ENCODE measurements at regions of chr12 and their contacts with region 1.

Region 1: DNA sequence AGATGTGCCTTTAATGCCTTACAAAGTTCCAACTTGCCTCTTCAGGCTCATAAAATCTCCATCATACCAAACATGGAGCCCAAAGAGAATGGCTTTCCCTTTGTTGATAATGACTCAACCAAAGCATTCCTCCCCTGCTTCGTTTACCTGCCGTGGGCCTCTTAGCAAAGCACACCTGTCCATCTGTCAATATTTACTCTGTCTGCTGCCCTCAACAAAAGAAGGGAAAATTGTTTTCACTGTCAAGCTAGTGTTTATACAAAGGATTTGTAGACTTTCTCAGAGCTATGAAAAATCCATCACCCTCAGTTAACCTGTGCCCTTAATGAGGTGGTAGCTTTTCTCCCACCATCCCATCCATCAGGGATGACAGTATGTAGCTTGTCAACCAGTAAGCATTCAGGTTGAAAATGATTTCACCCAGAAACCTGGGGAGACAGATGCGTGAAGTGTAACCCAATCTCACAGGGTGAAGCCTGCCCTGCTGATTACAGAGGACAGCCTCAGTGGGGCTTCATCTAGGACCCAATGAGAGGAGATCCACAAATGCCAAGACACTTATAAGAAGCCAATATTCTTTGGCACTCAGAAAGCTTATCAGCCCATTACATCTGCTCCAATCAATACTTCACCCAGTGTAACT is 278.1 kb downstream of the NUAK1 start:
- DNase-seq: no peak
- H3K4me3 ChIP-seq: no peak overlapping the region
- H3K27ac ChIP-seq: no peak overlapping the region
- H3K4me1 ChIP-seq: peaks cover 5 to 7% of the 10 kb centered on the region in 2 donors
- H3K27me3 ChIP-seq: no peaks in the 10 kb centered on the region
- CTCF ChIP-seq: no peak

Region 2: DNA sequence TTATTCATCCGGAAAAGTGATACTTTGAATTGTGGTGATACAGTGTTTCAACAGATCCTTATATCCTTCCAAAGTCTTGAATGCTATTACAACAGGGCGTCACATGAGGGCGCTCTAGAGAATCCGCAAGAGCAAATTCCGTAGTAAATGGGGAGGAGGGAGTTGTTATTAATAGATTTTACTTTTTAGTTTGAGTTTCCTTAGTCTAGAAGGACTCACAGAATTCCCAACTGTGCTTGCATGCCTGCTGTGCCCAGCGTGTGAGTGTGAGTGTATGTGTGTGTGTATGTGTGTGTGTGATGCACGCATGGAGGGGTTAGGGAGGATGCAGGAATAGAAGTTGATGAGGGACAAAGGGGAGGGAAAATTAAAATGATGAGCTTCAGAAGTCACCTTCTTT is 154.9 kb before region 1 on chr12:
- intact Hi-C with region 1: loop called (anchors 5 kb)
- DNase-seq: peak in 1 of 2 donors; percentile 82
- H3K4me3 ChIP-seq: no peak overlapping the region
- H3K27ac ChIP-seq: peak overlapping the region; percentile 74 to 83
- H3K4me1 ChIP-seq: peaks cover 0 to 18% of the 10 kb centered on the region in 2 donors
- H3K27me3 ChIP-seq: no peaks in the 10 kb centered on the region
- CTCF ChIP-seq: peak; percentile 57 to 90 (median 84)

Region 3: DNA sequence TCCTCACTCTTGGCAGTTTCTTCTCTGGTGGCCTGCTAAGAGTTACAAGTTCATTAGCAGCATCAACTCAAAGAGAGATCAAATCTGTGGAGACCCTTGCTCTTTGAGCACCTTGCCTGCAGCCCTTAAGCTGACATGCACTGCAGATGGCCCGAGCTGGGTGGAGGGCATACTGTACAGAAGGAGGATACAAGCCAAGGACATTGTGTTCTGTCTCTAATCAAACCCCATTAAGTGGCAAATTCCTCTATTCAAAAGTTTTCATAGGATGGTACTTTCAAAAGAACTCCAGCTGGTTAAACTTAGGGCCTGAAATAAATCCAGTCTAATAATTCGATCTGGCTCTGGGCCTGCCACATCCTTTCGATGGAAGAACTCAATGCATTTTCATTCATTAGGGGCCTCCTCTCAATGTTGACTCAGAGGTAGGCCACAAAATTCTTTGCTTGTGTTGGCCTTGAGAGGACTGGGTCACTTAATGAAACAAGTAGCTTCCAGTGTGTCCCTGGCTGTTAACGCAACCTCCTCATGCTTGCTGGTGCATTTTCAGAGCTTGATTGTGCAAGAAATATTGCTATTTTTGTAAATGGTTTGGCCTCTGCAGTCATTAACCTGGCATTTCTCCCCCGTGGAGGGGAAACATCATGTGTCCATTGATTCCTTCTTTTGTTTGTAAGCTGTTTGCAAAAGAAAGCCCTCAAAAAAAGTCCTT is 40.1 kb before region 1 on chr12:
- intact Hi-C with region 1: loop called (anchors 5 kb)
- DNase-seq: peak; percentile 41 to 87
- H3K4me3 ChIP-seq: no peak overlapping the region
- H3K27ac ChIP-seq: peak overlapping the region; percentile 34 to 71
- H3K4me1 ChIP-seq: peaks cover 5 to 26% of the 10 kb centered on the region in 2 donors
- H3K27me3 ChIP-seq: no peaks in the 10 kb centered on the region
- CTCF ChIP-seq: no peak

Region 4: DNA sequence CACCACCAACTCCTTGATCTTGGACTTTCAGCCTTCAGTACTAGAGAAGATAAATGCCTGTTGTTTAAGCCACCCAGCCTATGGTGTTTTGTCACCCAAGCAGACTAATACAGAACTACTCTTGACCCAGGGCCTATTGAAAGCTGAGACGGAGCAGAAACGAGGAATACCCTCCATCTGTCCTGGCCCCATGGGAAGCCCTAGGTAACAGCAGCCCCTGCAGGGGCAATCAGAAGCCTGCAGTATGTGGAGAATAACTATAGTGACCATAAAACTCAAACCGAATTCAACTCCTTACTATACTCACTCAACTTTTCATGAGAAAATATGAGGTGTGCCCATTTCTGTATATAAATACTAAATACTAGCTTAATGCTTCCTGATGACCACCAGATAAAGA is 29.3 kb before region 1 on chr12:
- intact Hi-C with region 1: no loop called
- DNase-seq: no peak
- H3K4me3 ChIP-seq: no peak overlapping the region
- H3K27ac ChIP-seq: no peak overlapping the region
- H3K4me1 ChIP-seq: peaks cover 0 to 9% of the 10 kb centered on the region in 2 donors
- H3K27me3 ChIP-seq: no peaks in the 10 kb centered on the region
- CTCF ChIP-seq: no peak

Region 5: DNA sequence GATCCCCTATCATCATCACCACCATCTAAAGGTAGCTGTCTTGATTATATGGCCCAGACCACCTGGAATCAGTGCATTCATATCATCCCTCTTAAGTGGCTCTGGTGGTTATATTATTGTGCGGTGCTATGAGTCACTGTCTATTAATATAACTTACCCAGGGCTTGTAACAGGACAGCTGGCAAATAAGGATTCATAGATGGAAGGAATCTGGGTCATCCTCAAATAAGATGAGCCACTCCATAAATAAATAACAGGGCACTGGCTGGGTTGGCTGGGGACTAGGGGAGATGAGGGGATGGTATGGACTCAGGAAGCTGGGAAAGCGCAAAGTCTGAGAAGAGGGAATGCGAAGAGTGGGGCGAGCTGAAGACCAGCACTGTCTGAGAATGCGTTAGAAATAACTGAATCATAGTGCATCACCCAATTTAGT is 62.0 kb after region 1 on chr12:
- intact Hi-C with region 1: loop called (anchors 5 kb)
- DNase-seq: no peak
- H3K4me3 ChIP-seq: no peak overlapping the region
- H3K27ac ChIP-seq: peak overlapping the region in 1 of 2 donors; percentile 13
- H3K4me1 ChIP-seq: peaks cover 0 to 8% of the 10 kb centered on the region in 2 donors
- H3K27me3 ChIP-seq: no peaks in the 10 kb centered on the region
- CTCF ChIP-seq: no peak

Region 6: DNA sequence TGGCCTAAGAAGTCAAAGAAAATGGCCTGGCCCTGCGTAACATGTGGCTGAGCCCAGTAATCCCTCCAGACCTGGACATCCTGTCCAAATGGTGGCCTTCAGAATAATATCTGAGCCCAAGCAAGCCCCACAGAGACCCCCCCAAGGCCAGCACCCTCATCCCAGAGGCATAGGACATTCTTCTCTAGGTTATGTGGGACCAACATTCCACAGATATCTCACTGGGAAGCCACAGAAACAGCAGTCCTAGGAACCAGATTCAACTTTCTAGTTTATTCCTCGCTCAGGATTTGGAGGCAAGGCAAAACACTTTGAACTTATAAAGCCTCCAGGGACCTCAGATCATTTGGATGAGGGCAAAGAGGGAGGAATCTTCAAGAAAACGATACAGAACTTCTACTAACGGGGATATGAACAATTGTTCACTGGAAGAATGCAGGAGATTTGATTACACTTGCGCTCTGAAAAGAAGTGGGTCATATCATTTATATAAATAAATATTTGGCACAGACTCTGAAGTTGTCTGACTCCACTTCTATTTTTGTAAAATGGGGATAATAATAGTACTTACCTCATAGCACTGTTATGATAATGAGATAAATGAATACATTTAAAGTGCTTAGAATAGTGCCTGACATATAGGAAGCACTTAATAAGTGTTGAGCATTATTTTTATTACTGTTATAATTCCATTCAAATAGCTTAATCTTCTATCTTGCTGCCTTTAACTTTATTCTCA is 106.5 kb after region 1 on chr12:
- intact Hi-C with region 1: loop called (anchors 2 kb)
- DNase-seq: no peak
- H3K4me3 ChIP-seq: no peak overlapping the region
- H3K27ac ChIP-seq: peak overlapping the region; percentile 77 to 84
- H3K4me1 ChIP-seq: peaks cover 10 to 21% of the 10 kb centered on the region in 2 donors
- H3K27me3 ChIP-seq: no peaks in the 10 kb centered on the region
- CTCF ChIP-seq: no peak

Region 7: DNA sequence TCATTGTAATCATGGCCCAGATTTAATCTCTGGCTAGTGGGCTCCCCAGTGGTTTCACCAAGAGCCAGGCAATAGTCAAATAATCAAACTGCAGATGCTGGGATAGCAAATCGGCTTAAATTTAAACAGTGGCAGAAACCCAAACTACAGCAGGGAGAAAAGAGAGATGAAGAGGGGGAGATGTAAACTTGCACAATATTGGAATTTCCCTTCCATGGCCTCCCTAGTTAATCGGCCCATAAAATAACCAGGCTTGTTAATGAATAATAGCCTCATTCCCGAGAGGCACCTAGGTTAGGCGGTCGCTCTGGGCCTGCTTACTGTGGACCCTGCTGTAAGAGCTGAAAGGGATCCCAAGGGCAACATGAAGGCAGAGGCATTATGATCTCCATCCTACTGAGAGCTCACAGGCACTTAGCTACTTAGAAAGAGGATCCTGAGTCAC is 161.9 kb after region 1 on chr12:
- intact Hi-C with region 1: loop called (anchors 5 kb)
- DNase-seq: no peak
- H3K4me3 ChIP-seq: no peak overlapping the region
- H3K27ac ChIP-seq: no peak overlapping the region
- H3K4me1 ChIP-seq: peaks cover 0 to 12% of the 10 kb centered on the region in 2 donors
- H3K27me3 ChIP-seq: no peaks in the 10 kb centered on the region
- CTCF ChIP-seq: no peak

Region 8: GRCh38 chr12:106090591-106091411 is 230.1 kb after region 1 on chr12:
- intact Hi-C with region 1: loop called (anchors 5 kb)
- DNase-seq: peak; percentile 77 to 93
- H3K4me3 ChIP-seq: peak overlapping the region in 1 of 2 donors; percentile 15
- H3K27ac ChIP-seq: peak overlapping the region; percentile 87 to 92
- H3K4me1 ChIP-seq: peaks cover 18 to 65% of the 10 kb centered on the region in 2 donors
- H3K27me3 ChIP-seq: no peaks in the 10 kb centered on the region
- CTCF ChIP-seq: no peak

Measured in ascending aorta (tissue), 2 donors.